Activated naive CD4-positive, alpha-beta T cell treated with anti-CD3 and anti-CD28 coated beads for 36 hours (primary cell): ENCODE measurements at regions of chr2 and their contacts with region 1.

Region 1: GRCh38 chr2:137947728-137948336 is 16.4 kb upstream of the HNMT start:
- DNase-seq: peak; percentile 63
- H3K4me3 Mint-ChIP-seq: no peak overlapping the region
- H3K27ac Mint-ChIP-seq: no peak overlapping the region
- H3K4me1 Mint-ChIP-seq: peaks cover 6% of the 10 kb centered on the region
- H3K27me3 Mint-ChIP-seq: no peaks in the 10 kb centered on the region

Region 2: DNA sequence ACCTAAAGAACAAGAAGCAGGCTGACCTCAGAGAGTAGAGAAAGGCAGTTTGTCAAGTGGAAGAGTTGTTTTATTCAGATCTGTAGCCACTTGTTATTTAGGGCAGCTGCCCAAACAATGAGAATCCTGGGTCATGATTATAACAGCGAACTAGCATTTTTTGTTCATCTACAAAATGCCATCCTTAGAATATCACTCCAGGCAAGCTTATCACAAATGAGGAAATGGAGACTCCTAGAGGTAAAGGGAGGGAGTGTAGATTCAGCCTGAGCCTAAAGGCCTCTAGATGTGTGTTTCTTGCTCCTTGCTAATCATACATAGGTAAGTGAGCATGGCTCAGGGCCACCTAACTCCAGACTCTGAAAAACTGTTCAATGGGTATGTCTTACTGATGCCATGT is 142.5 kb after region 1 on chr2:
- CTCF ChIA-PET with region 1: no interaction called
- intact Hi-C with region 1: loop called (anchors 5 kb)
- DNase-seq: no peak
- H3K4me3 Mint-ChIP-seq: no peak overlapping the region
- H3K27ac Mint-ChIP-seq: no peak overlapping the region
- H3K4me1 Mint-ChIP-seq: no peaks in the 10 kb centered on the region
- H3K27me3 Mint-ChIP-seq: peaks cover 3% of the 10 kb centered on the region

Region 3: DNA sequence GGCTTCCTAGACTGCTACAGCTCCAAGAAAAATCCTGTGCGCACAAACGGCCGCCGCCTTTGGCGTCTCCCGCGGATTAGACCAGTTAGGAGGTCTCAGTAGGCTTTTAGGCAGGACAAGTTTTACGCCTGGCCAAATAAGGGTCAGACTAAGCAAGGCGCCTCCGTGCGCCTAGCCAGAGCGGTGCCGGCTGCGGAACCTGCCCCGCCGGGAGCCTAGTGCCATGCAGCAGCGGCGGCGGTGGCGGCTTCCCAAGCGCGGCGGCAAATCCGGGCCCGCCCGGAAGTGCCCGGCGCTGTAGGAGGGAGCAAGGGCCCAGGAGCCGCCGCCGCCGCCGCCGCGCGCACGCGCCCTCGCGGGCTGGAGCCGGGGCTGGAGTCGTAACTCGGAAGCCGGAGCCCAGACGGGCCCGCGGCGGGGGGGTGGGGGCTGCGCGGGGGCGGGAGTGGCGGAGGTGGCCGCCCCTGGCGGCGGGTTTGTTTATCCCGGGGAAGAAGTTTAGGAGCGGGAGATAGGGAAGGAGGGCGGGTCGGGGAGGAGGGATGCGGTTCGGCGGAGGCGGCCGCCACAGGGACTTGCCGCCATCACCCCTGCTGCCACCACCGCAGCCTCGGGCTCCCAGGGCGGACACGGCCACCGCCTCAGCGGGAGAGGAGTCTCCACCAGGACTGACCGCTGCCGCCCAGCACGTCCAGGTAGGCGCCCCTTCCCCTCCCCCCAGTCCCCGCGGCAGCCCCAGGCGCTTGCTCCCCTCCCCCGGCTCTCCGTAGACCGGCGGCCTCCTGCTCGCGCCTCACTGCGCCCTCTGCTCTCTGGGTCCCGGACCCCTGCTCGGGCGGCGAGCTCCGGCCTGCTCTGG is 553.8 kb after region 1 on chr2 and contains the start of gene SPOPL:
- CTCF ChIA-PET with region 1: no interaction called
- intact Hi-C with region 1: loop called (anchors 10 kb)
- DNase-seq: peak; percentile 86
- H3K4me3 Mint-ChIP-seq: peak within 1 kb of the TSS; percentile 96
- H3K27ac Mint-ChIP-seq: peak within 1 kb of the TSS; percentile 92
- H3K4me1 Mint-ChIP-seq: peaks cover 33% of the 10 kb centered on the region
- H3K27me3 Mint-ChIP-seq: no peaks in the 10 kb centered on the region
- total RNA-seq, gene SPOPL: 8.4 to 8.7 TPM

Region 4: DNA sequence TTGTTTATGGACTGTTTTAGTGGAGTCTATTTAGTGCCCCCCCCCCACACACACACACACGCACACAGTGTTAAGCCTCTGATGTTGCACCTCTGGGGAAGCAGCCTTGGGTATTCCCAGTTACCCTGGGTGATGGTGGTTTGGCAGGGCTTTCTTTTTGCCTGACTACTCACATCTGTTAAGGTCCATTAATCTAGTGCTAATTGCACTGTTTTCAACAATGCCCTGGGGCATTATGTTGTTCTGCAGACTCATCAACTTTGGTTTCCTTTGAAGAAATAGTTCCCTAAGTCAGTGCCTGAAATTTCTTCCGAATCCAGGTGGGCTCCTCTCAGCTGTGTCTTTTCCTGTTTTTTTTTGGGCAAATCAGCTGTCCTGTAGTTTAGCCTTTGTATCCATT is 588.5 kb after region 1 on chr2:
- CTCF ChIA-PET with region 1: no interaction called
- intact Hi-C with region 1: no loop called
- DNase-seq: no peak
- H3K4me3 Mint-ChIP-seq: no peak overlapping the region
- H3K27ac Mint-ChIP-seq: no peak overlapping the region
- H3K4me1 Mint-ChIP-seq: peaks cover 3% of the 10 kb centered on the region
- H3K27me3 Mint-ChIP-seq: no peaks in the 10 kb centered on the region

Region 5: DNA sequence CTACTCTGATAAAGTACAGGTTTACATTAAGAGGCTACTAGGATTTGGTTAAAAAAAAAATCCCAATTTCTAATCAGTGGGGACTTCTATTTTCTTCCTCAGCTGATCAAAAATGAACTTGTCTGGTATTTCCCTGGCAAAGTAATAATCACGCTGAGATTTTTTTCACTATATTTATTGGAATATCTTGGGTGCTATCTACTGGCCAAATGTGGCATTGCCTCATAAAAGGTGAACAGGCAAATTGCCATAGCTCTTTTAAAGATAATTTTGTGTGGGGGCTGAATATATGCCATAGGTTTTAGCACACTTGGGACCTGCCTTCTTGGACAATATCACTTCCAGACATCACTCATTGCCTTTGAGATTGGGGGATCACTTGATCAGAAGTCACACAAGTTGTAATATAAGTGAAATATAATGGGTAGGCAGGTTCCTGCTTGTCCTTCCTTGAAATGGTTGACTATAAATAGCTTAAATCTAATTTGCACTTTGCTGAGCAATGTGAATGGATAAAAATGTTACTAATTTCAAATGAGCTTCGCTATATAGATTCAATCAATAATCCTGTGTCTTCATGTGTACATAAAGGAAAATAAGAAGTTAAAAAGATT is 839.3 kb after region 1 on chr2:
- CTCF ChIA-PET with region 1: no interaction called
- intact Hi-C with region 1: loop called (anchors 2 kb)
- DNase-seq: peak; percentile 6
- H3K4me3 Mint-ChIP-seq: no peak overlapping the region
- H3K27ac Mint-ChIP-seq: no peak overlapping the region
- H3K4me1 Mint-ChIP-seq: no peaks in the 10 kb centered on the region
- H3K27me3 Mint-ChIP-seq: peaks cover 13% of the 10 kb centered on the region